ENCODE measurements at regions of chr9 and their contacts with region 1.

Region 1: GRCh38 chr9:76810377-76810957 is 46.2 kb downstream of the PCA3 start:
- DNase-seq: peak in 3 of 5 donors; percentile 17 to 53 (median 36)
- H3K4me3 ChIP-seq: no peak overlapping the region
- H3K27ac ChIP-seq: no peak overlapping the region
- H3K4me1 ChIP-seq: no peaks in the 10 kb centered on the region
- H3K27me3 ChIP-seq: no peaks in the 10 kb centered on the region
- CTCF ChIP-seq: peak; percentile 25 to 87 (median 53)
- EP300 ChIP-seq: no peak
- POLR2A ChIP-seq: no peak

Region 2: GRCh38 chr9:76751001-76751400 is 59.5 kb before region 1 on chr9:
- intact Hi-C with region 1: no loop called
- DNase-seq: no peak
- H3K4me3 ChIP-seq: no peak overlapping the region
- H3K27ac ChIP-seq: no peak overlapping the region
- H3K4me1 ChIP-seq: no peaks in the 10 kb centered on the region
- H3K27me3 ChIP-seq: no peaks in the 10 kb centered on the region
- CTCF ChIP-seq: no peak
- EP300 ChIP-seq: no peak
- POLR2A ChIP-seq: no peak

Region 3: DNA sequence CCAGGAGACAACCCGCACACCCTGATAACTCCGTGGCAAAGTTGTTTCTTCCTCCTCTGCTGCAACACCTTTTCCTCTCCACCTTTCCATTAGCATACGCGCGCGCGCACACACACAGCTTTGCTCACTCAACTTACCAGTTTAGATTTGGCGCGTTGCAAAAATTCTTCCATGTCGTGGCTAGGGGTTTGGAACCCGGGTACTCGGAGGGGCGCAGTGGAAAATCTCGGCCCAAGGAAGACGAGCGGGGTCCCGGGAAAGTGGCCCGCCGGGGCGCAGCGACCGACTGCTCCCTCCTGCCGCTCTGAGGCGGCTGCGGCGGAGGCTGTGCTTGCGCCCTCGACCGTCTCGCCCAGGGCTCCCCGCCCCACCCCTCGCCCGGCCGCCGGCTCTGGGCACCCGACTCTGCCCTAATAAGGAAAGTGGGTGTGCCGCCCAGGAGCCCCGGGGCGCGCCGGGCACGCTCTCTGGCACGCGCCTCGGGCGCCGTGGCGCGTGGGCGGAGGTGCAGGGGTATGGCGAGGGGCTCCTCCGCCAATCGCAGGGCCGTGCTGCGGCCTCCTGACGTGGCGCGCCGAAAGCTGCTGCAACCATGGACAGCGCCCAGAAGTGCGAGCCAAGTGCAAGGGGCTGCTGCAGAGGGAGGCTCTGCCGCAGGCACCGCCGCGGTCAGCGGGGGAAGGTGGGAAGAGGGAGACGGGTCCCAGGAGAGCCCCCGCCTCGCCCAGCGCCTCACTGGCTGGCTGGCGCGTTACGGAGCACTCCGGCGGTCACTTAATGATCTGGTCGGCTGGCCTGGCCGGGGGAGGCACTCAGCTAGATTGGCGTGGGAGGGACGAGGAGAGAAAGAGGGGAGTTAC is 95.6 kb after region 1 on chr9 and contains the start of gene PRUNE2:
- intact Hi-C with region 1: loop called in 1 of 4 experiments (anchors 10 kb)
- DNase-seq: peak; percentile 36 to 85 (median 64)
- H3K4me3 ChIP-seq: peak within 1 kb of the TSS; percentile 44
- H3K27ac ChIP-seq: no peak within 1 kb of the TSS
- H3K4me1 ChIP-seq: peaks cover 7% of the 10 kb centered on the region
- H3K27me3 ChIP-seq: no peaks in the 10 kb centered on the region
- CTCF ChIP-seq: no peak
- EP300 ChIP-seq: no peak
- POLR2A ChIP-seq: no peak
- total RNA-seq, gene PRUNE2: 2.5 to 45.8 (median 13.7) TPM

Region 4: GRCh38 chr9:76996700-76997099 is 186.2 kb after region 1 on chr9:
- intact Hi-C with region 1: loop called in 1 of 4 experiments (anchors 5 kb)
- DNase-seq: no peak
- H3K4me3 ChIP-seq: no peak overlapping the region
- H3K27ac ChIP-seq: no peak overlapping the region
- H3K4me1 ChIP-seq: no peaks in the 10 kb centered on the region
- H3K27me3 ChIP-seq: no peaks in the 10 kb centered on the region
- CTCF ChIP-seq: no peak
- EP300 ChIP-seq: no peak
- POLR2A ChIP-seq: no peak

Region 5: DNA sequence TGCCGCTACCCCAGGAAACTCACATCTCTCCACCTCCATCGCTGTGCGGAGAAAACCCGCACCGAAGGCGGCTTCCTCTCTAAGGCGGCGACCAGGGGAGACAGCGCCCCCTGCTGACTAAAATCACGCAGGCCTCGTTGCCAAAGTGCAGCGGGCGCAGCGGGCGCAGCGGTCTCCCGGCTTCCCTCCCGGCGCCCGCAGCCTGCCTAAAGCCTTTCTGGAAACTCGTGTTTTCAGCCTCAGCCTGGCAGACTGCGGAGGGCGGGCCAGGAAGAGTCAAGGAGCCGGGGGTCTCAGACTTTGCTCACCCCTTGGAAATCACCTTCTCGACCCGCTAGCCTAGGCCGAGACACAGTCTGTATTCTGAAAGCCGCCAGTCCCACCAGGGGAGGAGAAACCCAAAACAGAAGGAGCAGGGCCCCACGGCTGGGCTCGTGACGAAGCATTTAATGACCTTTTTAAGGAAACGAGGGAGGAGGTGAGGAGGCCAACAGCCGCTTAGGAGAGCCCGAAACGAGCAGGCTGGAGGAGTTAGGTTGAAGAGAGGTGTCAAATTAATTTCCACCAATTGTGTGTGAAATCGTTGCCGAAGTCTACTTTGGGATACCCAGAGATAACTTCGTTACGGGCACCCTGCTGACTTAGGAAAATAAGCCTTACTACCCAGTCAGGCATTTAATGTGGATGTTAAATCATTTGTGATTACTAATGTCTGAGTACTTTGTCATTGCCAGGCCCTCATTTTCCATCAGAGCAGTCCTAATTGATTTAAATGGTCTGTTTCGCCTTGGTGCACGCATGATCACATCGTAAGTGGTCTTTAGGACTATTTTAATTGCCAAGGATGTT is 201.7 kb after region 1 on chr9:
- intact Hi-C with region 1: loop called in 1 of 4 experiments (anchors 10 kb)
- DNase-seq: peak in 4 of 5 donors; percentile 36 to 69 (median 44)
- H3K4me3 ChIP-seq: no peak overlapping the region
- H3K27ac ChIP-seq: no peak overlapping the region
- H3K4me1 ChIP-seq: no peaks in the 10 kb centered on the region
- H3K27me3 ChIP-seq: peaks cover 4% of the 10 kb centered on the region
- CTCF ChIP-seq: peak in 1 of 3 donors; percentile 28
- EP300 ChIP-seq: no peak
- POLR2A ChIP-seq: no peak

Region 6: DNA sequence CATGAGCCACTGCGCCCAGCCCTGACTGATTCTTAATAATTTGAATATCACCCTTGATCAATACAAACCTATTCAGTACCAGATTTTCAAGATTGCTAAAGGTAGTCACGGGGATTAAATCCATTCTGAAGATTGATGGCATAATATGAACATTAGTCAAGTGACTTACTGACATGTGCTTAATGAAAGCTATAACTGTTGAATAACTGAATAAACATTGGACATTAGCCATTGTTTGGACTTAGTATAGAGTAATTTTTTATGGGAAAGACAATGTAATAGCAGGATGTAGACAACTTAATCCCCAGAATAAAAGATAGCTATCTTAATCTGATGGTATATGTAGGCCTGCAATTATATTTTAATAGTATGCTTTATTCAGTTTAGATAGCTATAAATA is 331.9 kb after region 1 on chr9:
- intact Hi-C with region 1: loop called in 1 of 4 experiments (anchors 10 kb)
- DNase-seq: no peak
- H3K4me3 ChIP-seq: no peak overlapping the region
- H3K27ac ChIP-seq: no peak overlapping the region
- H3K4me1 ChIP-seq: no peaks in the 10 kb centered on the region
- H3K27me3 ChIP-seq: no peaks in the 10 kb centered on the region
- CTCF ChIP-seq: no peak
- EP300 ChIP-seq: no peak
- POLR2A ChIP-seq: no peak

Region 7: DNA sequence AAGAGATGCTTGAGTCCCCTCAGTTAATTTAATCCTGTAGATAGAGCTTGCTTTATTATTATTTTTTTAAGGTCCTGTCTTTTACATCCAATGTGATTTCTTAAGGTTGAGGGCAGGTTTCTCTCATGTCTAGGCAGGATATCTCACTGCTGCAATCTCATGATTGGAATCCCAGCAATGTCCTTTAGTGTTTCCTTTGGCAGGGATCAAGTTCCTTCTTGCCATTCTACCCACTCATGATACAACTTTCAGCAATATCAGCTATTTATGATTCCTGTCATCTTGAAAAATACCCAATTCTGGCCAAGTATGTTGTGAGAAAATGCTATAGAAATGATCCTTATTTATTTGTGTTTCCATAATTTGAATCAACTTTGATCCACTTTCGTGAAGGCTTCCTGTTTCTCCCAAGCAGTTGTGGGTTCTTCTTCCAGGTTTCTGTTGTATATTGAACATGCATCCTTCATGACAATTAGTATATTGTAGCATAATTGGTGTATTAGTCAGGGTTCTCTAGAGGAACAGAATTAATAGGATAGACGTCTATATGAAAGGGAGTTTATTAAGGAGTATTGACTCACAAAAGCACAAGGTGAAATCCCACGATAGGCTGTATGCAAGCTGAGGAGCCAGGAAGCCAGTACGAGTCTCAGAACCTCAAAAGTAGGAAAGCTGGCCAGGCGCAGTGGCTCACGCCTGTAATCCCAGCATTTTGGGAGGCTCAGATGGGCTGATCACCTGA is 348.5 kb after region 1 on chr9:
- intact Hi-C with region 1: loop called in 2 of 4 experiments (anchors 10 kb)
- DNase-seq: no peak
- H3K4me3 ChIP-seq: no peak overlapping the region
- H3K27ac ChIP-seq: no peak overlapping the region
- H3K4me1 ChIP-seq: no peaks in the 10 kb centered on the region
- H3K27me3 ChIP-seq: no peaks in the 10 kb centered on the region
- CTCF ChIP-seq: no peak
- EP300 ChIP-seq: no peak
- POLR2A ChIP-seq: no peak